ENCODE measurements at regions of chr14 and their contacts with region 1.

Region 1: DNA sequence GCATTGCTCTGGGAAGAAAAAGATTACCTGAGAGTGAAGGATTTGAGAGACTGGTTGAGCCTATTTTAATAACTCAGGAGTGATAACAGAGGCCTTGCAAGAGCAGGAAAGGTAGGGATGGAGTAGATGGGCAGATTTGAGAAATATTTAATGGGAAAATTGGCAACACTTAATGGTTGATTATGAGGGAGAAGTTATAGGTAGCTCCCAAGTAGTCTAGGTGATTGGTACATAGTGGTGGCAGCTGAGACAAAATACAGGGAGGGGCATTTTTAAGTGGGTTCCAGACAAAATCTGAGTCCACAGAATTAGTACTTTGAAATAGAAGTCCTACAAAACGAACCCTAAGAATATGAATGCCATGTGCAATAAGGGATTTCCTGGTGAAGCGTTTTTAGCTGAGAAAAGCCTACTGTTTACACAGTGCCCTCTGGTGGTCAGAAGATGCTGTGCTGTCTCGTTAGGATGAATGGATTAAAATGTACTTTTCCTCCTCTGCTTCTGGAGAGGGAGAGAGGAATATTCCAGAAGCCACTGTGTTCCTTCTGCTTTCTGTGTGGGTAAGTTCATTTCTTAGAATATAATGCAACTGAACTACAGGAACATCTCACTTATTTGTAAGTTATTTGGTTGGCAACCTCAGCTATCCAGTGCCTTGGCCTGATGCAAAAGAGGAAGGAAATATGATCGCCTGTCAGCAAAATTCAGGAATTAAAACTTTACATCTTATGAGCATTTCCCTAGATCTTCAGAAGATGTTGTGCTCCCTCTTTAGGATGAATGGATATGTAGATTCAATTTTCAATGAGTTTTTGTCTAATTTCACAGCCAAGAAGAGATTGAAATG is 6.5 kb downstream of the ZBTB1 start:
- DNase-seq: peak; percentile 78
- ATAC-seq: peak; percentile 49
- H3K4me3 Mint-ChIP-seq: peak overlapping the region; percentile 2
- H3K27ac Mint-ChIP-seq: peak overlapping the region; percentile 39
- H3K4me1 Mint-ChIP-seq: peaks cover 65% of the 10 kb centered on the region
- H3K27me3 Mint-ChIP-seq: no peaks in the 10 kb centered on the region

Region 2: GRCh38 chr14:64345513-64345912 is 165.5 kb before region 1 on chr14:
- CTCF ChIA-PET with region 1: interaction called, 15 read pairs
- POLR2A ChIA-PET with region 1: no interaction called
- DNase-seq: no peak
- ATAC-seq: no peak
- H3K4me3 Mint-ChIP-seq: no peak overlapping the region
- H3K27ac Mint-ChIP-seq: no peak overlapping the region
- H3K4me1 Mint-ChIP-seq: peaks cover 7% of the 10 kb centered on the region
- H3K27me3 Mint-ChIP-seq: no peaks in the 10 kb centered on the region

Region 3: GRCh38 chr14:64465191-64465822 is 45.7 kb before region 1 on chr14 and contains the start of gene AKAP5:
- CTCF ChIA-PET with region 1: interaction called, 15 read pairs
- POLR2A ChIA-PET with region 1: no interaction called
- DNase-seq: peak; percentile 71
- ATAC-seq: peak; percentile 92
- H3K4me3 Mint-ChIP-seq: peak within 1 kb of the TSS; percentile 80
- H3K27ac Mint-ChIP-seq: peak within 1 kb of the TSS; percentile 71
- H3K4me1 Mint-ChIP-seq: peaks cover 40% of the 10 kb centered on the region
- H3K27me3 Mint-ChIP-seq: peaks cover 4% of the 10 kb centered on the region
- total RNA-seq, gene AKAP5: 1.9 to 2.1 TPM

Region 4: GRCh38 chr14:64491637-64492036 is 19.4 kb before region 1 on chr14:
- CTCF ChIA-PET with region 1: interaction called, 43 read pairs
- POLR2A ChIA-PET with region 1: interaction called, 4 read pairs
- DNase-seq: no peak
- ATAC-seq: no peak
- H3K4me3 Mint-ChIP-seq: no peak overlapping the region
- H3K27ac Mint-ChIP-seq: peak overlapping the region; percentile 16
- H3K4me1 Mint-ChIP-seq: peaks cover 31% of the 10 kb centered on the region
- H3K27me3 Mint-ChIP-seq: no peaks in the 10 kb centered on the region

Region 5: GRCh38 chr14:64496764-64497163 is 14.3 kb before region 1 on chr14:
- CTCF ChIA-PET with region 1: interaction called, 43 read pairs
- POLR2A ChIA-PET with region 1: interaction called, 4 read pairs
- DNase-seq: no peak
- ATAC-seq: no peak
- H3K4me3 Mint-ChIP-seq: no peak overlapping the region
- H3K27ac Mint-ChIP-seq: peak overlapping the region; percentile 30
- H3K4me1 Mint-ChIP-seq: peaks cover 59% of the 10 kb centered on the region
- H3K27me3 Mint-ChIP-seq: no peaks in the 10 kb centered on the region

Region 6: DNA sequence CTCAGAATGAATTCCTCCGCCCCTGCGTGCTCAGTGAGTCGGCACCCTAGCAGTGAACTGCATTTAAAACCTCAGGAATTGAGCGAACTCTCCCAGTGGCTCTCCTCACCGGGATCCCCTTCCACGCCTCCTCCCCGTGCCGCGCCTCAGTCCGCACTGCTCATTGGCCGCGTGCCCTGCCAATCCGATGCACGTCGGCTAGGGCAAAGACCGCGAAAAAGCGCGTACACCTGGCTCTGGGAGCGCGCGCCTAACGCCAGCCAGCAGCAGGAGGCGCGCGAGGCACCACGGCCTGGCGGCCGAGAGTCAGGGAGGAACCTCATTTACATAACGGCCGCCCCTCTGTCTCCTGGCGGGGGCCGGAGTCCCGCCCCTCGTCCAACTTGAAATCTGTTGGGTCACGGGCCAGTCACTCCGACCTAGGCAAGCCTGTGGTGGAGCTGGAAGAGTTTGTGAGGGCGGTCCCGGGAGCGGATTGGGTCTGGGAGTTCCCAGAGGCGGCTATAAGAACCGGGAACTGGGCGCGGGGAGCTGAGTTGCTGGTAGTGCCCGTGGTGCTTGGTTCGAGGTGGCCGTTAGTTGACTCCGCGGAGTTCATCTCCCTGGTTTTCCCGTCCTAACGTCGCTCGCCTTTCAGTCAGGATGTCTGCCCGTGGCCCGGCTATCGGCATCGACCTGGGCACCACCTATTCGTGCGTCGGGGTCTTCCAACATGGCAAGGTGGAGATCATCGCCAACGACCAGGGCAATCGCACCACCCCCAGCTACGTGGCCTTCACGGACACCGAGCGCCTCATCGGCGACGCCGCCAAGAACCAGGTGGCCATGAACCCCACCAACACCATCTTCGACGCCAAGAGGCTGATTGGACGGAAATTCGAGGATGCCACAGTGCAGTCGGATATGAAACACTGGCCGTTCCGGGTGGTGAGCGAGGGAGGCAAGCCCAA is 29.4 kb after region 1 on chr14 and contains the start of gene HSPA2:
- CTCF ChIA-PET with region 1: interaction called, 12 read pairs
- POLR2A ChIA-PET with region 1: no interaction called
- DNase-seq: peak; percentile 96
- ATAC-seq: peak; percentile 93
- H3K4me3 Mint-ChIP-seq: peak within 1 kb of the TSS; percentile 89
- H3K27ac Mint-ChIP-seq: peak within 1 kb of the TSS; percentile 92
- H3K4me1 Mint-ChIP-seq: peaks cover 33% of the 10 kb centered on the region
- H3K27me3 Mint-ChIP-seq: peaks cover 41% of the 10 kb centered on the region
- total RNA-seq, gene HSPA2: 1.7 to 2.2 TPM

Measured in activated CD8-positive, alpha-beta T cell treated with anti-CD3 and anti-CD28 coated beads, Interleukin-2, amount 10 ng/mL, durations not matched to agents 7 days and 5 days (primary cell).